Activated CD4-positive, alpha-beta T cell treated with anti-CD3 and anti-CD28 coated beads, Interleukin-2, amount 10 ng/mL, durations not matched to agents 24 days and 14 days (primary cell): ENCODE measurements at regions of chr2 and their contacts with region 1.

Region 1: DNA sequence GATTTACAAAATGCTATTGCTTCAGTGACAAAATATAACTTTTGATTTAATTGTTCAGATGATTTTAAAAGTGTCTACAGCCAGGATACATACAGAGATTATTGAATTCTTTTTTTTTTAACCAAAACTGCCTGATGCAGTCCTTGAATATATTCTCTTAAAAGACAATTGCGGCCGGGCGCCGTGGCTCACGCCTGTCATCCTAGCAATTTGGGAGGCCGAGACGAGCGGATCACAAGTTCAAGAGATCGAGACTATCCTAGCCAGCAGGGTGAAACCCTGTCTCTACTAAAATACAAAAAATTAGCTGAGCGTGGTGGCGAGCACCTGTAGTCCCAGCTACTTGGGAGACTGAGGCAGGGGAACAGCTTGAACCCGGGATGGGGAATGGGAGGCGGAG is 497.0 kb upstream of the FSIP2 start:
- DNase-seq: no peak
- H3K4me3 Mint-ChIP-seq: no peak overlapping the region
- H3K27ac Mint-ChIP-seq: no peak overlapping the region
- H3K4me1 Mint-ChIP-seq: no peaks in the 10 kb centered on the region
- H3K27me3 Mint-ChIP-seq: no peaks in the 10 kb centered on the region

Region 2: GRCh38 chr2:185222311-185222710 is 19.2 kb before region 1 on chr2:
- intact Hi-C with region 1: loop called (anchors 1 kb)
- DNase-seq: no peak
- H3K4me3 Mint-ChIP-seq: no peak overlapping the region
- H3K27ac Mint-ChIP-seq: no peak overlapping the region
- H3K4me1 Mint-ChIP-seq: no peaks in the 10 kb centered on the region
- H3K27me3 Mint-ChIP-seq: no peaks in the 10 kb centered on the region

Region 3: DNA sequence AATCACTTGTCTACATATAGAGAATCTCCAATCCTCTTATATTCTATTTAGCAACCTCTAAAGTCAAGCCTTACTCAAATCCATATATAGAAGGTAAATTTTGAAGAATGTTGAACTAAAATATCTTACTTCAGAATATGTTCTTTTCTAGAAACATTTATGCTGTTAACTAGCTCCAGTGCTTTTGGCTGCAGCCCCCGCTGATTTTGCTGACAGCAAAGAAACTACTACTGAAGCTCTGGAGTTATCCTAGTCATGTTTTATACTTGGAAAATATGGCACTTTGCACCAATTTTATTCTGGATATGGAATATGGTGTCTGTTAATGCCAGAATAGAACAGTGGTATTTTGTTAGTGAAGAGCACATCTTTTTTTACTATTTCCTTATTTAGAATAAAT is 284.6 kb after region 1 on chr2:
- intact Hi-C with region 1: no loop called
- DNase-seq: no peak
- H3K4me3 Mint-ChIP-seq: no peak overlapping the region
- H3K27ac Mint-ChIP-seq: no peak overlapping the region
- H3K4me1 Mint-ChIP-seq: no peaks in the 10 kb centered on the region
- H3K27me3 Mint-ChIP-seq: no peaks in the 10 kb centered on the region